ENCODE measurements at regions of chr9 and their contacts with region 1.

Region 1: GRCh38 chr9:114017741-114018715 is 60.1 kb downstream of the AMBP start:
- DNase-seq: peak; percentile 38

Region 2: GRCh38 chr9:113984639-113985380 is 33.2 kb before region 1 on chr9:
- intact Hi-C with region 1: loop called in 1 of 2 experiments (anchors 1 kb)
- DNase-seq: peak; percentile 29

Measured in posterior vena cava (tissue), 2 donors.